ENCODE measurements at regions of chr12 and their contacts with region 1.

Region 1: DNA sequence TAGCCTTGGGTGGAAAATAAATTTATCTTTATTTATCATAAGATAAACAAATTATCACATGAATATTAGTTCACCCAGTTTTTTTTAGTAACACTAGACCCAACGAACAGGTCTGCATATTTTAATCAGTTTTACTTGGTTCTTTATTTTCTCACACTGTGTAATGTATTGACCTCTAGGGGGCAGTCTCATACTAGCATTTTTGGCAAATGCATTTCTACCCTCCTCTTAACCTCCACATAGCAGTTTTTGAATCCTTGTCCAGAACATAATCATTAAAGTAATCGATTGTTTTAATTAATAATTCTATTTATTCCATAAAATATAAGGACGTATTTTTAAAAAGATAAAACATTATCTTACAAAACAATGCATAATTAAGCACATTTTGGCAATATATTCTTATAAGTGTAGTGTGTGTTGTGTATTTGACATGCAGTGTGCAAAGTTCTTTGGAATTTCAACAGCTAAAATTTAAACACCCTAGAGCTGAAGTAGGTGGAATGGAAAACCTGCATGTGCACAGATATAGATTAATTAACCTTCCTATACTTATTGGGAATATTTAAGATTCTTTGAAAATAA is 31.6 kb upstream of the PTPRQ start:
- DNase-seq: no peak
- H3K4me3 ChIP-seq: no peak overlapping the region
- H3K27ac ChIP-seq: no peak overlapping the region
- H3K4me1 ChIP-seq: no peaks in the 10 kb centered on the region
- H3K27me3 ChIP-seq: no peaks in the 10 kb centered on the region
- CTCF ChIP-seq: peak; percentile 85

Region 2: GRCh38 chr12:80205960-80206359 is 206.5 kb before region 1 on chr12:
- intact Hi-C with region 1: no loop called
- DNase-seq: no peak
- H3K4me3 ChIP-seq: no peak overlapping the region
- H3K27ac ChIP-seq: no peak overlapping the region
- H3K4me1 ChIP-seq: no peaks in the 10 kb centered on the region
- H3K27me3 ChIP-seq: no peaks in the 10 kb centered on the region
- CTCF ChIP-seq: no peak

Region 3: DNA sequence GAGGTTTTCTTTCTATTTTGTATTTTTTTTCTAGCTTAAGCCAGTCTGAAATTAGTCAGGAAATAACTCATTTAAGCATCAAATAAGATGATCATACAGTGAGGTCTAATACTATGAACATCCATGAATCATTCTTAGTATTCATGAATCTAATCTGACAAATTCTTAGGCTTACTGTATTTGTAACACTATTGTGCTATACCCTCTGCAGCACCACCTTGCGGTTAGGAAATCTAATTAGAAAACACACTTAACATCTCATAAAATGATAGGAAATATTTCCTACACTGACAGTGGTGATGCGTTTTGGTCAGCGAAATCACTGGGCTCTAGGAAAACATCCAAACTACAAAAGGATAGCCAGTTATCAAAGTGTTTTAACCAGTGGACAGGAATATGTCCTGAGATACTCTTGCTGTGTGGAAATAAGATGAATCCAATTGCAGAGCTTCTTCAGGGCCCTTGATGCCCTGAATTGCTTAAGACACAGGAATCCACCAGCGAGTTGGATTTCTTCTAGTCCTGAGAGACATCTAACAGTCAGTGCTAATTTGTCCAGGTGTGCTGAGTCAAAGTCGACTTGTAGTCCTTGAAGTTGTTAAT is 185.6 kb after region 1 on chr12:
- intact Hi-C with region 1: loop called (anchors 10 kb)
- DNase-seq: no peak
- H3K4me3 ChIP-seq: no peak overlapping the region
- H3K27ac ChIP-seq: no peak overlapping the region
- H3K4me1 ChIP-seq: no peaks in the 10 kb centered on the region
- H3K27me3 ChIP-seq: no peaks in the 10 kb centered on the region
- CTCF ChIP-seq: peak; percentile 45

Region 4: GRCh38 chr12:80763874-80764273 is 351.4 kb after region 1 on chr12:
- intact Hi-C with region 1: loop called (anchors 10 kb)
- DNase-seq: no peak
- H3K4me3 ChIP-seq: no peak overlapping the region
- H3K27ac ChIP-seq: no peak overlapping the region
- H3K4me1 ChIP-seq: no peaks in the 10 kb centered on the region
- H3K27me3 ChIP-seq: no peaks in the 10 kb centered on the region
- CTCF ChIP-seq: peak; percentile 71

Measured in left ventricle myocardium inferior (tissue), 1 donor.